ENCODE measurements at regions of chr2 and their contacts with region 1.

Region 1: GRCh38 chr2:63861220-63861822 is 19.6 kb downstream of the UGP2 start:
- DNase-seq: peak; percentile 26
- H3K4me3 Mint-ChIP-seq: no peak overlapping the region
- H3K27ac Mint-ChIP-seq: no peak overlapping the region
- H3K4me1 Mint-ChIP-seq: peaks cover 42% of the 10 kb centered on the region
- H3K27me3 Mint-ChIP-seq: no peaks in the 10 kb centered on the region

Region 2: GRCh38 chr2:63692002-63692606 is 169.2 kb before region 1 on chr2:
- intact Hi-C with region 1: loop called (anchors 1 kb)
- DNase-seq: no peak
- H3K4me3 Mint-ChIP-seq: no peak overlapping the region
- H3K27ac Mint-ChIP-seq: no peak overlapping the region
- H3K4me1 Mint-ChIP-seq: no peaks in the 10 kb centered on the region
- H3K27me3 Mint-ChIP-seq: peaks cover 4% of the 10 kb centered on the region

Region 3: GRCh38 chr2:63698825-63699548 is 162.3 kb before region 1 on chr2:
- intact Hi-C with region 1: loop called (anchors 1 kb)
- DNase-seq: no peak
- H3K4me3 Mint-ChIP-seq: no peak overlapping the region
- H3K27ac Mint-ChIP-seq: no peak overlapping the region
- H3K4me1 Mint-ChIP-seq: no peaks in the 10 kb centered on the region
- H3K27me3 Mint-ChIP-seq: peaks cover 4% of the 10 kb centered on the region

Measured in activated T-helper 1 cell treated with anti-CD3 and anti-CD28 coated beads, Interleukin-12 subunit alpha, Interleukin-12 subunit beta, Interleukin-2, Interleukin-4 antibody, amounts not matched to agents 30 ng/mL and 10 ng/mL and 1 ng/mL, durations not matched to agents 14 hours and 24 hours and 36 hours (primary cell).